ENCODE measurements at regions of chr16 and their contacts with region 1.

Region 1: DNA sequence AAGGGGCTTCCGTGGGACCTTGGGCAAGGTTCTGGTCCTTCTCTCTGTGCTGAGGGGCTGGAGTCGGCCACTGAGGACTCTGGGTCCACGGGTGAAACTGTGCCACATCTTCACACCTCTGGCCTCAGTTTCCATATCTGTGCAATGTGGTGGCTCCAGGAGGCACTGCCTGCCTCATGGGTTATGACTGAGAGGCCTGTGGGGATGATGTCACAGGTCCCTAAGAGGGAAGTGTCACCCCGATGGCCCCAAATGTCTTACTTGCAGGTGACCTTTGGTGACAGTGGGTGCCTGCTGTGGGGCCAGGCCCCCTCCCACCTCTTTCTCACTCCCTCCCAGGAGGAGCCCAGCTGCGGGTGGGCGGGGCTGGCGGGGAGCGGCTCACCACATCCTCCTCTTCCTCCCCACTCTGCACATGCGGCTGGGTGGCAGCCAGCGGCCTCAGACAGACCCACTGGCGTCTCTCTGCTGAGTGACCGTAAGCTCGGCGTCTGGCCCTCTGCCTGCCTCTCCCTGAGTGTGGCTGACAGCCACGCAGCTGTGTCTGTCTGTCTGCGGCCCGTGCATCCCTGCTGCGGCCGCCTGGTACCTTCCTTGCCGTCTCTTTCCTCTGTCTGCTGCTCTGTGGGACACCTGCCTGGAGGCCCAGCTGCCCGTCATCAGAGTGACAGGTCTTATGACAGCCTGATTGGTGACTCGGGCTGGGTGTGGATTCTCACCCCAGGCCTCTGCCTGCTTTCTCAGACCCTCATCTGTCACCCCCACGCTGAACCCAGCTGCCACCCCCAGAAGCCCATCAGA is at the start of gene IL21R:
- DNase-seq: peak; percentile 76 to 95 (median 89)
- ATAC-seq: peak; percentile 82 to 89 (median 86)
- H3K4me3 ChIP-seq: peak within 1 kb of the TSS; percentile 90 to 98
- H3K4me3 Mint-ChIP-seq: peak within 1 kb of the TSS; percentile 88 to 99 (median 92)
- H3K27ac ChIP-seq: peak within 1 kb of the TSS; percentile 83
- H3K27ac Mint-ChIP-seq: peak within 1 kb of the TSS; percentile 96 to 97
- H3K4me1 ChIP-seq: peaks cover 21 to 63% of the 10 kb centered on the region in 2 experiments
- H3K4me1 Mint-ChIP-seq: peaks cover 59 to 77% (median 74%) of the 10 kb centered on the region in 3 donors
- H3K27me3 ChIP-seq: no peaks in the 10 kb centered on the region
- H3K27me3 Mint-ChIP-seq: no peaks in the 10 kb centered on the region
- total RNA-seq, gene IL21R: 35.6 to 44.3 (median 38.2) TPM

Region 2: DNA sequence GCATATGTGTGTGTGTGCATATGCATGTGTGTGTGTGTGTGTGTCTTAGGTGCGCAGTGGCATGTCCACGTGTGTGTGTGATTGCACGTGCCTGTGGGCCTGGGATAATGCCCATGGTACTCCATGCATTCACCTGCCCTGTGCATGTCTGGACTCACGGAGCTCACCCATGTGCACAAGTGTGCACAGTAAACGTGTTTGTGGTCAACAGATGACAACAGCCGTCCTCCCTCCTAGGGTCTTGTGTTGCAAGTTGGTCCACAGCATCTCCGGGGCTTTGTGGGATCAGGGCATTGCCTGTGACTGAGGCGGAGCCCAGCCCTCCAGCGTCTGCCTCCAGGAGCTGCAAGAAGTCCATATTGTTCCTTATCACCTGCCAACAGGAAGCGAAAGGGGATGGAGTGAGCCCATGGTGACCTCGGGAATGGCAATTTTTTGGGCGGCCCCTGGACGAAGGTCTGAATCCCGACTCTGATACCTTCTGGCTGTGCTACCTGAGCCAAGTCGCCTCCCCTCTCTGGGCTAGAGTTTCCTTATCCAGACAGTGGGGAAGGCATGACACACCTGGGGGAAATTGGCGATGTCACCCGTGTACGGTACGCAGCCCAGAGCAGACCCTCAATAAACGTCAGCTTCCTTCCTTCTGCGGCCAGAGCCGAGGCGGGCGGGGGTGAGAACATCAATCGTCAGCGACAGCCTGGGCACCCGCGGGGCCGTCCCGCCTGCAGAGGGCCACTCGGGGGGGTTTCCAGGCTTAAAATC is 47.6 kb after region 1 on chr16:
- CTCF ChIA-PET with region 1: interaction called in 1 of 2 experiments, 4 read pairs
- POLR2A ChIA-PET with region 1: interaction called, 5 to 88 read pairs
- DNase-seq: peak in 34 of 35 experiments; percentile 53 to 91 (median 82)
- ATAC-seq: peak; percentile 25 to 77 (median 36)
- H3K4me3 ChIP-seq: peak overlapping the region in 1 of 2 donors; percentile 2
- H3K4me3 Mint-ChIP-seq: peak overlapping the region; percentile 41 to 67 (median 51)
- H3K27ac ChIP-seq: peak overlapping the region; percentile 92
- H3K27ac Mint-ChIP-seq: peak overlapping the region; percentile 90 to 91
- H3K4me1 ChIP-seq: peaks cover 16 to 93% of the 10 kb centered on the region in 2 experiments
- H3K4me1 Mint-ChIP-seq: peaks cover 81 to 89% (median 86%) of the 10 kb centered on the region in 3 donors
- H3K27me3 ChIP-seq: no peaks in the 10 kb centered on the region
- H3K27me3 Mint-ChIP-seq: no peaks in the 10 kb centered on the region

Measured in T-cell (primary cell).